ENCODE measurements at regions of chr1 and their contacts with region 1.

Region 1: DNA sequence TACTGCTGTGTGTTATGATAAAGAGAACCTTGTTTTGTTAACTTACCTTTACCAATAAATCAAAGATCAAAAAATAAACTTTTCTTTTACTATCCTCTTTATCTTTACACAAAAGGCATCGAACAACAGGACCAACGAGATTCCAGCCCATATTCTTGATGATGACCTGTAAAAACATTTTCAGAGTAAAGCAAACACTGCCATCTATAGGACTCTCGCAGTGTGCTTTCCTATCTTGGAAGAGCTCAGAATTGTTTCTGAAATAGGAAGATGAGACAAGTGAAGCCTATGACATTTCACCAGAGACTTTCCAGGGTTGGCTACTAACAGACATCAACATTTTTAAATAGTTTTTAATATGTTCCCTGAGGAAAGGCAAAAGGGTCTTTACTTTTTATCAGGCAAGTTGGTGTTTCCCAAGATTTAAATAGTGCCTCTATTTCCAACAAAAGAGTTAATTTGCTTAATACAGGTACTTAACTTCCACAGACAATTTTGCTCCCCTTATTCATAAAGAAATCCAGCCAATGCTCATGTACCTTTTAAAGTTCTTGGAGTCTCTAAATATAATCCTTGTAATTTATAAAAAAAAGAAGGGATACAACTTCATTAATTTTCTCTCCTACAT is 7.3 kb downstream of the GLMN start:
- DNase-seq: peak; percentile 10 to 57
- ATAC-seq: peak; percentile 74 to 81; a peak in 5 of 6 replicates
- H3K4me3 ChIP-seq: no peak overlapping the region
- H3K27ac ChIP-seq: no peak overlapping the region
- H3K4me1 ChIP-seq: no peaks in the 10 kb centered on the region
- CTCF ChIP-seq: peak; percentile 65
- EP300 ChIP-seq: no peak
- POLR2A ChIP-seq: no peak
- RAD21 ChIP-seq: peak; percentile 61 to 69

Region 2: GRCh38 chr1:91997607-91998195 is 293.8 kb before region 1 on chr1:
- CTCF ChIA-PET with region 1: interaction called, 15 read pairs
- POLR2A ChIA-PET with region 1: no interaction called
- DNase-seq: peak; percentile 22 to 50
- ATAC-seq: no peak
- H3K4me3 ChIP-seq: no peak overlapping the region
- H3K27ac ChIP-seq: no peak overlapping the region
- H3K4me1 ChIP-seq: no peaks in the 10 kb centered on the region
- CTCF ChIP-seq: peak; percentile 77
- EP300 ChIP-seq: no peak
- POLR2A ChIP-seq: no peak
- RAD21 ChIP-seq: peak; percentile 79

Region 3: DNA sequence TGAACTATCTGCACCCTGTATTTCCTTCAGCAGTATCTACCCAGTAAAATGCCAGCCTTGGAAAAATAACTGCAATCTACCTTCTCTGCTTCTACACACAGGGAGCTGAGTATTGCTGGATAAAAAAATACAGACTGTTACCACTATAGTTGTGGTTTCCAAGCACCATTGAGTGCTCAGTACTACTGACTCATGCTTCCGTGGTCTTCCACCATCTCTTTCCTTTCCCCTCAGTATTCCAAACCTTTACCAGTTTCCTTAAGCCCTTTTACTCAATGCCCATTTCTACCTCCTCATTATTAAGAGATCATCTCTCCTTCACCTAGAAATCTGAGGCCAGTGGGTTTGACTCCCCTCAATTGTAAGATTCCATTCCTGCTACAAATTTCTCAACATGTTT is 16.5 kb before region 1 on chr1:
- CTCF ChIA-PET with region 1: no interaction called
- POLR2A ChIA-PET with region 1: no interaction called
- DNase-seq: no peak
- ATAC-seq: no peak
- H3K4me3 ChIP-seq: no peak overlapping the region
- H3K27ac ChIP-seq: no peak overlapping the region
- H3K4me1 ChIP-seq: no peaks in the 10 kb centered on the region
- CTCF ChIP-seq: no peak
- EP300 ChIP-seq: no peak
- POLR2A ChIP-seq: no peak
- RAD21 ChIP-seq: no peak

Measured in A549 (cell line).